ENCODE measurements at regions of chr14 and their contacts with region 1.

Region 1: GRCh38 chr14:51219473-51220448 is 20.3 kb upstream of the TMX1 start:
- DNase-seq: no peak
- ATAC-seq: no peak
- H3K4me3 ChIP-seq: no peak overlapping the region
- H3K4me3 Mint-ChIP-seq: no peak overlapping the region
- H3K27ac ChIP-seq: no peak overlapping the region
- H3K27ac Mint-ChIP-seq: no peak overlapping the region
- H3K4me1 ChIP-seq: no peaks in the 10 kb centered on the region
- H3K4me1 Mint-ChIP-seq: no peaks in the 10 kb centered on the region
- H3K27me3 ChIP-seq: no peaks in the 10 kb centered on the region
- H3K27me3 Mint-ChIP-seq: no peaks in the 10 kb centered on the region
- CTCF ChIP-seq: peak; percentile 53

Region 2: GRCh38 chr14:50954811-50955372 is 264.9 kb before region 1 on chr14:
- CTCF ChIA-PET with region 1: interaction called, 15 read pairs
- POLR2A ChIA-PET with region 1: no interaction called
- intact Hi-C with region 1: no loop called
- DNase-seq: peak; percentile 21
- ATAC-seq: no peak
- H3K4me3 ChIP-seq: no peak overlapping the region
- H3K4me3 Mint-ChIP-seq: no peak overlapping the region
- H3K27ac ChIP-seq: no peak overlapping the region
- H3K27ac Mint-ChIP-seq: no peak overlapping the region
- H3K4me1 ChIP-seq: no peaks in the 10 kb centered on the region
- H3K4me1 Mint-ChIP-seq: no peaks in the 10 kb centered on the region
- H3K27me3 ChIP-seq: peaks cover 0 to 4% (median 0%) of the 10 kb centered on the region in 4 experiments
- H3K27me3 Mint-ChIP-seq: no peaks in the 10 kb centered on the region
- CTCF ChIP-seq: peak; percentile 58

Region 3: GRCh38 chr14:51087031-51087441 is 132.7 kb before region 1 on chr14:
- CTCF ChIA-PET with region 1: no interaction called
- POLR2A ChIA-PET with region 1: no interaction called
- intact Hi-C with region 1: no loop called
- DNase-seq: no peak
- ATAC-seq: no peak
- H3K4me3 ChIP-seq: no peak overlapping the region
- H3K4me3 Mint-ChIP-seq: no peak overlapping the region
- H3K27ac ChIP-seq: no peak overlapping the region
- H3K27ac Mint-ChIP-seq: no peak overlapping the region
- H3K4me1 ChIP-seq: no peaks in the 10 kb centered on the region
- H3K4me1 Mint-ChIP-seq: peaks cover 5% of the 10 kb centered on the region
- H3K27me3 ChIP-seq: no peaks in the 10 kb centered on the region
- H3K27me3 Mint-ChIP-seq: no peaks in the 10 kb centered on the region
- CTCF ChIP-seq: no peak

Region 4: GRCh38 chr14:51157012-51157411 is 62.7 kb before region 1 on chr14:
- CTCF ChIA-PET with region 1: interaction called, 32 read pairs
- POLR2A ChIA-PET with region 1: no interaction called
- intact Hi-C with region 1: no loop called
- DNase-seq: peak; percentile 24
- ATAC-seq: no peak
- H3K4me3 ChIP-seq: no peak overlapping the region
- H3K4me3 Mint-ChIP-seq: no peak overlapping the region
- H3K27ac ChIP-seq: no peak overlapping the region
- H3K27ac Mint-ChIP-seq: no peak overlapping the region
- H3K4me1 ChIP-seq: peaks cover 6 to 7% of the 10 kb centered on the region in 2 donors
- H3K4me1 Mint-ChIP-seq: peaks cover 13% of the 10 kb centered on the region
- H3K27me3 ChIP-seq: no peaks in the 10 kb centered on the region
- H3K27me3 Mint-ChIP-seq: no peaks in the 10 kb centered on the region
- CTCF ChIP-seq: peak; percentile 43

Region 5: DNA sequence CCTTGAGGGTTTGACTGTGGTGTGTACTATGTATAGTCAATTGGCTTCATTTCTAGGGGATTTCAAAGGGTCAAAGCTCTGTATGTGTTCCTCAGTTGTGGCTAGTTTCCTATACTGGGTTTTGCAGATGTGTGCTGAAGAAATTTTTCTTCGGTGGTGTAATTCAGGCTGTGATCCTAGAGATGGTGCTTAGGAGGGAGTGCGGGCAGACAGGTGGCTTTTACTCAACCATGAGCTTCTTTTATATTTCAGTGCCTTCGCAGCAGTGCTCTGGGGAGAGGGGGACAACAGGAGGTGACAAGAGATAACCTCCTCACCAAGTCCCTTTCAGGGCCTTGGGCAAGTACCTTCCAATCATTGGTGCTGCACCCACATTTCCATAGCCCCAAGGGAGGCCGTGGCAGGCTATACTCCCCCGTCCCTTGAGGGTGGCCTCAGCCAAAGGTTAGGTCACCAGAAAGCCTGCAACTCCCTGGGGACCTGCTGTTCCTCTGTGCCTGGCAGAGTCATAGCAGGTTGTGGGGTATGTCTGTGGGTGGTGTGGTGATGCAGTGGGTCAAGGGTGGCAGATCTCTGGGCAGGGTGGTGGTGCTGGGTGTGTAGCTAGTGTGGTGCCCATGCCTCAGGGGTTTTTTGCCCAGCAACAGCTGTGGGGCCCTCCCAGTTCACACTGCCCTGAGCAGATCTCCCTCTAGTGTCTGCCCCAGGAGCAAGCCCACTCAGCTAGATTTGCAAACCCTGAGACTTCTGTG is 16.7 kb before region 1 on chr14:
- CTCF ChIA-PET with region 1: interaction called, 11 read pairs
- POLR2A ChIA-PET with region 1: no interaction called
- intact Hi-C with region 1: no loop called
- DNase-seq: peak; percentile 57
- ATAC-seq: peak; percentile 86
- H3K4me3 ChIP-seq: no peak overlapping the region
- H3K4me3 Mint-ChIP-seq: peak overlapping the region; percentile 64
- H3K27ac ChIP-seq: no peak overlapping the region
- H3K27ac Mint-ChIP-seq: peak overlapping the region; percentile 71
- H3K4me1 ChIP-seq: peaks cover 29 to 30% of the 10 kb centered on the region in 2 donors
- H3K4me1 Mint-ChIP-seq: peaks cover 33% of the 10 kb centered on the region
- H3K27me3 ChIP-seq: peaks cover 0 to 5% (median 1%) of the 10 kb centered on the region in 4 experiments
- H3K27me3 Mint-ChIP-seq: peaks cover 12% of the 10 kb centered on the region
- CTCF ChIP-seq: no peak

Measured in B cell (primary cell).